Cardiac septum (tissue), 1 donor: ENCODE measurements at regions of chr20 and their contacts with region 1.

Region 1: DNA sequence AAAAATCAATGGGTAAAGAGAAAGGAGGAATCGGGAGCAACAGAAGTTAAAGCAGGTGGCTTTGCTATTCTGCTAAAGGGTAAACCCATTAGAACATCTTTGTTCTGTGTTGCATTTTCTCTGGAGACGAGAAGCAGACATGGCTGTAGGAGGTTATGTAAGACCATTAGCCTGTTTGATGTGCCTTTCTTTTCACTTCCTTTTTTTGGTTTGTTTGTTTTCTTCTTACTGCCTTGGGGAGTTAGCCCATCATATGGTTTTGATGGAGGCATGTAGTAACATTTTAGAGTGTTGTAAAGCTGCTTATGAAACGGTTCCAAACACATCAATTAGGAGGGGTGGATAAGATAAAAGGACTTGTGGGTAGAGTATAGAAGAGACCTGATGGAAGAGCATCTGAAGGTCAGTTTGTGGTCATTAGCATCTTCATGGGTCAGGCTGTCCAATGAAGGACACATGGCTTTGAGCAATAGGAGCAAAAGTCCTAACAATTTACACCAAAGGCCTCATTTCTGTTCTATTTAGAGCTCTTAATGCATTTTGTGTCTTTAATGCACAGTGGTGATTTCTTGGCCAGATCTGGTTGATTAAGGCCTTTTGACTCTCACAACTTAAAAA is 131.1 kb downstream of the DOK5 start:
- DNase-seq: no peak

Region 2: GRCh38 chr20:55253781-55254180 is 647.3 kb after region 1 on chr20:
- intact Hi-C with region 1: loop called (anchors 10 kb)
- DNase-seq: no peak